Activated CD4-positive, alpha-beta T cell treated with anti-CD3 and anti-CD28 coated beads for 36 hours (primary cell): ENCODE measurements at regions of chr9 and their contacts with region 1.

Region 1: GRCh38 chr9:21688108-21689102 is 114.0 kb upstream of the MTAP start:
- DNase-seq: no peak
- ATAC-seq: peak; percentile 30
- H3K4me3 Mint-ChIP-seq: no peak overlapping the region
- H3K27ac Mint-ChIP-seq: no peak overlapping the region
- H3K4me1 Mint-ChIP-seq: peaks cover 52% of the 10 kb centered on the region
- H3K27me3 Mint-ChIP-seq: peaks cover 3% of the 10 kb centered on the region

Region 2: GRCh38 chr9:21576331-21577189 is 111.8 kb before region 1 on chr9:
- CTCF ChIA-PET with region 1: no interaction called
- POLR2A ChIA-PET with region 1: no interaction called
- intact Hi-C with region 1: loop called in 1 of 2 experiments (anchors 5 kb)
- DNase-seq: peak; percentile 66
- ATAC-seq: peak; percentile 90
- H3K4me3 Mint-ChIP-seq: no peak overlapping the region
- H3K27ac Mint-ChIP-seq: peak overlapping the region; percentile 61
- H3K4me1 Mint-ChIP-seq: peaks cover 32% of the 10 kb centered on the region
- H3K27me3 Mint-ChIP-seq: peaks cover 4% of the 10 kb centered on the region

Region 3: GRCh38 chr9:21611896-21612295 is 76.5 kb before region 1 on chr9:
- CTCF ChIA-PET with region 1: no interaction called
- POLR2A ChIA-PET with region 1: no interaction called
- intact Hi-C with region 1: loop called in 1 of 2 experiments (anchors 1 kb)
- DNase-seq: peak; percentile 57
- ATAC-seq: peak; percentile 87
- H3K4me3 Mint-ChIP-seq: no peak overlapping the region
- H3K27ac Mint-ChIP-seq: no peak overlapping the region
- H3K4me1 Mint-ChIP-seq: peaks cover 61% of the 10 kb centered on the region
- H3K27me3 Mint-ChIP-seq: no peaks in the 10 kb centered on the region

Region 4: GRCh38 chr9:21638104-21638503 is 50.3 kb before region 1 on chr9:
- CTCF ChIA-PET with region 1: no interaction called
- POLR2A ChIA-PET with region 1: interaction called, 3 read pairs
- intact Hi-C with region 1: loop called in 1 of 2 experiments (anchors 5 kb)
- DNase-seq: no peak
- ATAC-seq: no peak
- H3K4me3 Mint-ChIP-seq: no peak overlapping the region
- H3K27ac Mint-ChIP-seq: no peak overlapping the region
- H3K4me1 Mint-ChIP-seq: no peaks in the 10 kb centered on the region
- H3K27me3 Mint-ChIP-seq: no peaks in the 10 kb centered on the region

Region 5: DNA sequence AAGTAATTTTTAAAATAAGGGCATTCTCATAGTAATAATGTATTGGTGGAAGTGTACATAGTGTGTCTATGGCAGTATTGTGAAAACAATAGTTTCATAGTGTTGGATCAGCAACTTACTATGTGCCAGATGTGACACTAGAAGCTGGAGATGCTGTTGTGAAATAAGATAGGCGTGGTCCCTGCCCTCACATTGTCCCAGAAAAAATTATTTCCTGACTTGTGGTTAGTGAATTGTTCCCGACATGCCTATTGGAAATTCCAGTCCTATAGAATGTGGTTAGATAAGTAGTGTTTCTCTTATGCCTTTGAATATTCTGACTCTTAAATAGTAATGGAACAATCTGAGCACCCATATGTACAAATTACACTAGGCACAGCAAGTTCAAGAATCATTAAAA is 58.8 kb after region 1 on chr9:
- CTCF ChIA-PET with region 1: no interaction called
- POLR2A ChIA-PET with region 1: no interaction called
- intact Hi-C with region 1: no loop called
- DNase-seq: no peak
- ATAC-seq: no peak
- H3K4me3 Mint-ChIP-seq: no peak overlapping the region
- H3K27ac Mint-ChIP-seq: no peak overlapping the region
- H3K4me1 Mint-ChIP-seq: no peaks in the 10 kb centered on the region
- H3K27me3 Mint-ChIP-seq: peaks cover 12% of the 10 kb centered on the region

Region 6: DNA sequence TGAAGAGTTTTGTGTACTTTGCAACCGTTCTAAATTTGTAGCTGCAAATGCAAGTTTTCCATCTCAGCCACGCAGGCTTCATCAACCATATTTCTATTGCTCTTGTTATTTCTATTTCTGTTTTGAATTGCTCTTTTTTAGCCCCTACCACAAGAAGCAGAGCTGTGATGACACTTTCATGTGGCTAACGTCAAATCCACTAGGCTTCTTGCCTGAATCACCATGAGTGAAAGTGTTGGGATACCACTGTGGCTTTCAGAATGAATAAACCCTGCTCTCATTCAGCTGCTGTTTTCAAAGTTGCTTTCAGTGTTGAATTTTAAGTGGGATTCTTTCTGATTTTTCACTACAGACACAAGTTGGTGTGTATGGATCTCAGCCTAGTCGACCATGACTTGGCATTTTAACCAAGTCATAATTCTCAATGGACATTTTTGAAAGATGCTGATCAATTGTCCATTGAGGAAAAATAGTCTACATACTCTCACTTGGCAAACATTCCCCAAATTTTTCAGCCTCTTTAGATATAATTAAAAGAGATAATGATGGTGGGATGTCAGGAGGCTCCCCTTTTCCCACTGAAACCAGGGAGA is 73.0 kb after region 1 on chr9:
- CTCF ChIA-PET with region 1: no interaction called
- POLR2A ChIA-PET with region 1: no interaction called
- intact Hi-C with region 1: loop called (anchors 1 kb)
- DNase-seq: peak; percentile 60
- ATAC-seq: peak; percentile 95
- H3K4me3 Mint-ChIP-seq: no peak overlapping the region
- H3K27ac Mint-ChIP-seq: no peak overlapping the region
- H3K4me1 Mint-ChIP-seq: peaks cover 12% of the 10 kb centered on the region
- H3K27me3 Mint-ChIP-seq: peaks cover 49% of the 10 kb centered on the region

Region 7: GRCh38 chr9:22425551-22425950 is 737.1 kb after region 1 on chr9:
- CTCF ChIA-PET with region 1: no interaction called
- POLR2A ChIA-PET with region 1: no interaction called
- intact Hi-C with region 1: no loop called
- DNase-seq: no peak
- ATAC-seq: no peak
- H3K4me3 Mint-ChIP-seq: no peak overlapping the region
- H3K27ac Mint-ChIP-seq: no peak overlapping the region
- H3K4me1 Mint-ChIP-seq: no peaks in the 10 kb centered on the region
- H3K27me3 Mint-ChIP-seq: peaks cover 7% of the 10 kb centered on the region